Naive thymus-derived CD4-positive, alpha-beta T cell (primary cell): ENCODE measurements at regions of chr19 and their contacts with region 1.

Region 1: GRCh38 chr19:49640113-49640898 is at the start of gene RRAS:
- DNase-seq: peak; percentile 91 to 100 (median 99)
- ATAC-seq: peak; percentile 78
- H3K4me3 ChIP-seq: peak within 1 kb of the TSS; percentile 64
- H3K4me3 Mint-ChIP-seq: peak within 1 kb of the TSS; percentile 86 to 98 (median 93)
- H3K27ac ChIP-seq: peak within 1 kb of the TSS; percentile 95
- H3K27ac Mint-ChIP-seq: peak within 1 kb of the TSS; percentile 93 to 99 (median 99)
- H3K4me1 ChIP-seq: peaks cover 27 to 40% of the 10 kb centered on the region in 2 donors
- H3K4me1 Mint-ChIP-seq: peaks cover 57 to 67% (median 63%) of the 10 kb centered on the region in 7 donors
- H3K27me3 ChIP-seq: no peaks in the 10 kb centered on the region
- H3K27me3 Mint-ChIP-seq: peaks cover 0 to 6% (median 0%) of the 10 kb centered on the region in 5 donors
- total RNA-seq, gene RRAS: 11.0 to 18.6 (median 13.8) TPM

Region 2: GRCh38 chr19:48170038-48170812 is 1470.1 kb before region 1 on chr19 and contains the starts of genes LIG1 and ZSWIM9:
- CTCF ChIA-PET with region 1: no interaction called
- POLR2A ChIA-PET with region 1: no interaction called
- intact Hi-C with region 1: loop called in 1 of 2 experiments (anchors 2 kb)
- DNase-seq: peak; percentile 87 to 96 (median 94)
- ATAC-seq: peak; percentile 89
- H3K4me3 ChIP-seq: peak within 1 kb of the TSS; percentile 98
- H3K4me3 Mint-ChIP-seq: peak within 1 kb of the TSS; percentile 90 to 100 (median 97)
- H3K27ac ChIP-seq: peak within 1 kb of the TSS; percentile 94
- H3K27ac Mint-ChIP-seq: peak within 1 kb of the TSS; percentile 92 to 100 (median 97)
- H3K4me1 ChIP-seq: peaks cover 14 to 16% of the 10 kb centered on the region in 2 donors
- H3K4me1 Mint-ChIP-seq: peaks cover 20 to 44% (median 32%) of the 10 kb centered on the region in 7 donors
- H3K27me3 ChIP-seq: no peaks in the 10 kb centered on the region
- H3K27me3 Mint-ChIP-seq: no peaks in the 10 kb centered on the region
- total RNA-seq, gene LIG1: 61.0 to 134 (median 122) TPM
- total RNA-seq, gene ZSWIM9: 5.0 to 11.6 (median 7.4) TPM

Region 3: GRCh38 chr19:49118565-49119410 is 521.5 kb before region 1 on chr19 and contains the start of gene C19orf73:
- CTCF ChIA-PET with region 1: no interaction called
- POLR2A ChIA-PET with region 1: no interaction called
- intact Hi-C with region 1: loop called in 1 of 2 experiments (anchors 5 kb)
- DNase-seq: peak; percentile 93 to 98 (median 97)
- ATAC-seq: peak; percentile 91
- H3K4me3 ChIP-seq: peak within 1 kb of the TSS; percentile 83
- H3K4me3 Mint-ChIP-seq: peak within 1 kb of the TSS; percentile 83 to 91 (median 88)
- H3K27ac ChIP-seq: peak within 1 kb of the TSS; percentile 92
- H3K27ac Mint-ChIP-seq: peak within 1 kb of the TSS; percentile 89 to 95 (median 93)
- H3K4me1 ChIP-seq: peaks cover 13 to 16% of the 10 kb centered on the region in 2 donors
- H3K4me1 Mint-ChIP-seq: peaks cover 25 to 43% (median 39%) of the 10 kb centered on the region in 7 donors
- H3K27me3 ChIP-seq: no peaks in the 10 kb centered on the region
- H3K27me3 Mint-ChIP-seq: peaks cover 0 to 27% (median 0%) of the 10 kb centered on the region in 5 donors
- total RNA-seq, gene C19orf73: 1.3 to 2.8 (median 2.2) TPM

Region 4: DNA sequence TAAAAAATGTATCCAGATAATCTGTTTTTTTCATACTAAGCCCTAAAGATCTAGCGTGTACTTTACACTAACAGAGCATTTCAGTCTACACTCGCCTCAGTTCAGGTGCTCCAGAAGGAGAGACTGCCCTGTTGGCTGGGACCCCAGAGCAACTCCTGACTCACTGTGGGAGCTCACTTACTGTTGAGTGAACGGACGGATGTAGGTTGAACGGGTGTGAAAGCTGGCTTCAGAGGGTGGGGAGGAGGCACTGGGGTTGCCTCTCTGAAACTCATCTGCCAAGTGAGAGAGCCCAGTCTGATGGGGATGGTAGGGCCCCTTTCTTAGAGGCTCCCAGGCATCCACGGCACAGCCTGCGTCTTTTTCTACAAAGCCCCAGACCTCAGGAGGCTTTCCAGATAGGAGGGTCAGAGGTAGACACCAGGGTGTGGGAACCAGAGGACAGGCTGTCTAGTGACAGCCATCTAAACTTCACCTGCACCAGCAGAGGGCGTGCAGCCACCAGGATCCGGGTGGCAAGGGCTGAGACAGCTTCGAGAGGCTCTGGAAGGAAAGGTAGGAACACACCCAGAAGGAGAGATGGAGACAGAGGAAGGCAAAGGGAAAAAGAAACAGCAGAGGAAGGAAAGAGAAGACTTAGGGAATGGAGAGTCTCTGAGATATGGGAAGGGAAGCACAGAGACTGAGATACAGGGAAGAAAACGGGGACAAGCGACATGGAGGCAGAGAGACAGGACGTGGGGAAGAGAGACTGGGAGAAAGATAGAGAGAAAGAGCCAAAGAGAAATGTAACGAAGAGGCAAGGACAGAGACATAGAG is 248.5 kb before region 1 on chr19:
- CTCF ChIA-PET with region 1: no interaction called
- POLR2A ChIA-PET with region 1: no interaction called
- intact Hi-C with region 1: no loop called
- DNase-seq: peak; percentile 61 to 82 (median 74)
- ATAC-seq: peak; percentile 89
- H3K4me3 ChIP-seq: no peak overlapping the region
- H3K4me3 Mint-ChIP-seq: peak overlapping the region in 2 of 10 donors; percentile 3 to 51
- H3K27ac ChIP-seq: no peak overlapping the region
- H3K27ac Mint-ChIP-seq: peak overlapping the region in 6 of 9 donors; percentile 1 to 84 (median 54)
- H3K4me1 ChIP-seq: peaks cover 7 to 13% of the 10 kb centered on the region in 2 donors
- H3K4me1 Mint-ChIP-seq: peaks cover 6 to 26% (median 10%) of the 10 kb centered on the region in 7 donors
- H3K27me3 ChIP-seq: no peaks in the 10 kb centered on the region
- H3K27me3 Mint-ChIP-seq: peaks cover 0 to 11% (median 3%) of the 10 kb centered on the region in 5 donors

Region 5: DNA sequence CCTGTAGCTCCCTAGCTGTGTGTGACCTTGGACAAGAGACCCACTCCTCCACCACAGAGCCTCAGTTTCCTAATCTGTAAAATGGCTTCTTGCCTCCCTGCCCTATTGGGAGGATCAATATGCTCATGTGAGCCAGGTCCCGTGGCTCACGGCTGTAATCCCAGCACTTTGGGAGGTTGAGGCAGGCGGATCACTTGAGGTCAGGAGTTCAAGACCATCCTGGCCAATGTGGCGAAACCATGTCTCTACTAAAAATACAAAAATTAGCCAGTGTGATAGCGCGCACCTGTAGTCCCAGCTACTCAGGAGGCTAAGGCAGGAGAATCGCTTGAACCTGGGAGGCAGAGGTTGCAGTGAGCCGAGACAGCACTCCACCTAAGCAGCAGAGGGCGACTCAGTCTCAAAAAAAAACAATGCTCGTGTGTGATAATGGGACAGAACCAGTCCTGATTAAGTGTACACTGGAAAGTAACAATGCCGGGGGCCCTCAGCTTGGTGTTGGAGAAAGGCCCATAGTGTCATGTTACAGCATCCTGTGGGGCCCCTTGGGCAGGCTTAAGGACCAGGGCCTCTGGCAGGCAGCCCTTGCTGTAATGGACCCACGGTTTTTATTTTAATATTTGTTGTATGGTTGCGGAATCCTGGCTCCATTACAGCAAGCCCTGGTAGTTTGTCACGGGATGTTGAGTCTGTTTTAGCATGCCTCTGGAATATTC is 137.3 kb before region 1 on chr19:
- CTCF ChIA-PET with region 1: interaction called, 3 read pairs
- POLR2A ChIA-PET with region 1: no interaction called
- intact Hi-C with region 1: loop called in 1 of 2 experiments (anchors 1 kb)
- DNase-seq: peak in 5 of 9 donors; percentile 68 to 81 (median 77)
- ATAC-seq: no peak
- H3K4me3 ChIP-seq: no peak overlapping the region
- H3K4me3 Mint-ChIP-seq: peak overlapping the region in 6 of 10 donors; percentile 7 to 96 (median 48)
- H3K27ac ChIP-seq: peak overlapping the region; percentile 99
- H3K27ac Mint-ChIP-seq: peak overlapping the region; percentile 91 to 100 (median 98)
- H3K4me1 ChIP-seq: peaks cover 36% of the 10 kb centered on the region in 2 donors
- H3K4me1 Mint-ChIP-seq: peaks cover 24 to 55% (median 40%) of the 10 kb centered on the region in 7 donors
- H3K27me3 ChIP-seq: no peaks in the 10 kb centered on the region
- H3K27me3 Mint-ChIP-seq: peaks cover 0 to 9% (median 0%) of the 10 kb centered on the region in 5 donors

Region 6: DNA sequence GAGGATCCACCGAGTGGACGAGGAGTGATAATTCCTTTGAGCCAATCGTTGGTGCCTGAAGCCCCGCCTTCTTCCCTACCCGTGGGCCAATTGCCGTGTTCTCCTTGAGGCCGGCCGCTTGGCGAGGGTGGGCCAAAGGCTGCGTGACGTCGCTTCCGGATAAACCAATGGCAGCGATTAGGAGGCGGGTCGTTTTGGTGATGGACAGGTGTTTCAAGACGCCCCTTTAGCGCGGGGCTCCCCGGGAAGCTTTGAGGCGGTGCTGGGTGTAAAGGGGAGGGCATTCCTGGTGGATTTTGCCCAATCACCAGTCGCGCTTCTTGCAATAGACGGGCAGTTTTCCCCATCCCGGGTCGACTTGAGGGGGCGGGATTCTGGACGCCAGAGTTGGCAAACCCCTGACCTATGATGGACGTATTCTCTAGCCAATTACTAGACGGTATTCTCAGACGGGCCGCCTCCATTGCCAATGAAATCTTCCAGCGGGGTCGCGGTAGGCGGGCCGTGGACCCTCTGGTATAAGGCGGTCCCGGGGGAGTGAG is 36.5 kb after region 1 on chr19:
- CTCF ChIA-PET with region 1: interaction called, 11 read pairs
- POLR2A ChIA-PET with region 1: interaction called, 25 read pairs
- intact Hi-C with region 1: loop called (anchors 1 kb)
- DNase-seq: peak; percentile 84 to 99 (median 97)
- ATAC-seq: peak; percentile 87
- H3K4me3 ChIP-seq: peak overlapping the region; percentile 86
- H3K4me3 Mint-ChIP-seq: peak overlapping the region; percentile 91 to 100 (median 98)
- H3K27ac ChIP-seq: peak overlapping the region; percentile 95
- H3K27ac Mint-ChIP-seq: peak overlapping the region; percentile 93 to 100 (median 99)
- H3K4me1 ChIP-seq: peaks cover 18 to 23% of the 10 kb centered on the region in 2 donors
- H3K4me1 Mint-ChIP-seq: peaks cover 18 to 50% (median 43%) of the 10 kb centered on the region in 7 donors
- H3K27me3 ChIP-seq: no peaks in the 10 kb centered on the region
- H3K27me3 Mint-ChIP-seq: no peaks in the 10 kb centered on the region

Region 7: DNA sequence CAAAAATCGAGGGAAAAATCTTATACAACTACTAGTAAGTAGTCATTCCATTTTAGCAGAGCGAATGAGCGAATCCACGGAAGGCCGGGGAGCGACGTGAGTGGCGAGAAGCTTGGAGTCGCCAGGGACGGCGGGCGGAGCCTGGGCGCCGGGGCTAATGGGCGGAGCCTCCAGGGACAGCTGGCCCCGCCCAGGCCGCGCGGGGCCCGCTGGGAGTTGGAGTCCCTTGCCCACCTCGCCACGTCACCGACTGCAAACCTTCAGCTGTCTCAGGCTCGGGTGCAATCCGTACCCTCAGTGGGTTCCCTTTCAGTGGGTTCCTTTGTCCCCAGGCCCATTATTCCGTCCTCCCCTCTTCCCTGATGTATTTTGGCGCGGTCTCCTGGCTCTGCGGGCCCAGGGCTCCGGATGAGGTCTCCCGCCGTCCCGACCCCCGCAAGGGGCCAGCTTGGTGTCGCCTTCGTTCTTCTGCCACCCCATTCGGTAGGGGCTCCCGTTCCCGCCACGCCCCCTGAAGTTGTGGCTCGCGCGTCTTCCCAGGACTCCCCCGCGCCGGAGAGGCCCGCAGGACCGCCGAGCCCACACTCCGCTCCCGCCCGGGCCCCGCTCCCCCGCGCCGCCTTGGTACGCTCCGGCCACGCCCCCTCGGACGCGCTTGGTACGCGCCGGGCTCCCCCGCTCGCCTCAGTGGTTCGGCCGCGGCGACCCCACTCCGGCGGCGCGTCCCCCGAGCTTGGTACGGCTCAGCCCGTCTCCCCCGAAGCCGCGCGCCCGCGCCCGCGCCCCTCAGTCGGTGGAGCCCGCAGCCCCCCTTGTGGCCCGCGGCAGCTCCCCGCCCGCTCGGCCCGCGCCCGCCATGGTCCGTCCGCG is 210.4 kb after region 1 on chr19 and contains the start of gene PTOV1:
- CTCF ChIA-PET with region 1: no interaction called
- POLR2A ChIA-PET with region 1: no interaction called
- intact Hi-C with region 1: loop called in 1 of 2 experiments (anchors 1 kb)
- DNase-seq: peak; percentile 78 to 97 (median 88)
- ATAC-seq: peak; percentile 93
- H3K4me3 ChIP-seq: peak within 1 kb of the TSS; percentile 89
- H3K4me3 Mint-ChIP-seq: peak within 1 kb of the TSS; percentile 91 to 96 (median 92)
- H3K27ac ChIP-seq: peak within 1 kb of the TSS; percentile 99
- H3K27ac Mint-ChIP-seq: peak within 1 kb of the TSS; percentile 85 to 98 (median 95)
- H3K4me1 ChIP-seq: peaks cover 7 to 25% of the 10 kb centered on the region in 2 donors
- H3K4me1 Mint-ChIP-seq: peaks cover 22 to 37% (median 33%) of the 10 kb centered on the region in 7 donors
- H3K27me3 ChIP-seq: no peaks in the 10 kb centered on the region
- H3K27me3 Mint-ChIP-seq: peaks cover 0 to 11% (median 0%) of the 10 kb centered on the region in 5 donors
- total RNA-seq, gene PTOV1: 92.8 to 170 (median 160) TPM

Region 8: DNA sequence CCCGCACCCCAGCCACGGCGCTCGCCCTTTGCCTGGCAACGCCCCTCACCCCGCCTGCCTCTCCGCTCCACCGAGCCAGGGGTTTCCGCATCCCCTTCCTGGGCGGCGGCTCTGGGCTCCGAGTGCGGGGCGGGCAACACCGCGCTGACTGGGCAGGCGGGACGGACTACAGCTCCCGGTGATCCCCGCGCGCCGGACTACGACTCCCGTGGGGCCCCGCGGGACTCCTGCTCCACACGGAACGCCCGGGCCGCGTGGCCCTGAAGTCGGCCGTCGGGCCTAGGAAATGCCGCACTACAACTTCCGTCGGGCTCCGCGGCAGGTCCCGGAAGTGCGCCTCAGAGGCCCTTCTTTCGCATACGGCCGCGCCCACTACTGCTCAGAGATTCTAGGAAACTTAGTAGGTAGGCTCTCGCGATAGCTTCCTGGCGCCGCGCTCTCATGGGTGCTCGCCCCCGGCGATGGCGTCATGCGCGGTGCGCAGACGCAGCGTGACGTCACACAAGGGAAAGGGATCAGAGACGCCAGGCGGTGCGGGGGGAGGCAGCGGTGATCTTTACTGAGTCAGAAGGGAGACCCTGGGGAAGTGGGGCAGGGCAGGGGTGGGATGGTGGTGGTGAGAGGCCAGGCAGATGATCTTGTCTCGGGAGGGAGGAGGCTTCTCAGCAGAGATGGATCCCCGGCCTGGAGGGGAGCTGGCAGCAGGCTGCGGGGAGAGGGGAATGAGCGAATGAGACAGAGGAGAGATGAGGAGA is 870.9 kb after region 1 on chr19 and contains the start of gene JOSD2:
- CTCF ChIA-PET with region 1: no interaction called
- POLR2A ChIA-PET with region 1: no interaction called
- intact Hi-C with region 1: loop called in 1 of 2 experiments (anchors 2 kb)
- DNase-seq: peak; percentile 89 to 99 (median 96)
- ATAC-seq: peak; percentile 94
- H3K4me3 ChIP-seq: peak within 1 kb of the TSS; percentile 75
- H3K4me3 Mint-ChIP-seq: peak within 1 kb of the TSS; percentile 75 to 97 (median 88)
- H3K27ac ChIP-seq: peak within 1 kb of the TSS; percentile 86
- H3K27ac Mint-ChIP-seq: peak within 1 kb of the TSS; percentile 87 to 99 (median 97)
- H3K4me1 ChIP-seq: peaks cover 7 to 16% of the 10 kb centered on the region in 2 donors
- H3K4me1 Mint-ChIP-seq: peaks cover 0 to 27% (median 19%) of the 10 kb centered on the region in 7 donors
- H3K27me3 ChIP-seq: no peaks in the 10 kb centered on the region
- H3K27me3 Mint-ChIP-seq: peaks cover 0 to 16% (median 6%) of the 10 kb centered on the region in 5 donors
- total RNA-seq, gene JOSD2: 13.0 to 45.9 (median 22.7) TPM